ENCODE measurements at regions of chr19 and their contacts with region 1.

Region 1: DNA sequence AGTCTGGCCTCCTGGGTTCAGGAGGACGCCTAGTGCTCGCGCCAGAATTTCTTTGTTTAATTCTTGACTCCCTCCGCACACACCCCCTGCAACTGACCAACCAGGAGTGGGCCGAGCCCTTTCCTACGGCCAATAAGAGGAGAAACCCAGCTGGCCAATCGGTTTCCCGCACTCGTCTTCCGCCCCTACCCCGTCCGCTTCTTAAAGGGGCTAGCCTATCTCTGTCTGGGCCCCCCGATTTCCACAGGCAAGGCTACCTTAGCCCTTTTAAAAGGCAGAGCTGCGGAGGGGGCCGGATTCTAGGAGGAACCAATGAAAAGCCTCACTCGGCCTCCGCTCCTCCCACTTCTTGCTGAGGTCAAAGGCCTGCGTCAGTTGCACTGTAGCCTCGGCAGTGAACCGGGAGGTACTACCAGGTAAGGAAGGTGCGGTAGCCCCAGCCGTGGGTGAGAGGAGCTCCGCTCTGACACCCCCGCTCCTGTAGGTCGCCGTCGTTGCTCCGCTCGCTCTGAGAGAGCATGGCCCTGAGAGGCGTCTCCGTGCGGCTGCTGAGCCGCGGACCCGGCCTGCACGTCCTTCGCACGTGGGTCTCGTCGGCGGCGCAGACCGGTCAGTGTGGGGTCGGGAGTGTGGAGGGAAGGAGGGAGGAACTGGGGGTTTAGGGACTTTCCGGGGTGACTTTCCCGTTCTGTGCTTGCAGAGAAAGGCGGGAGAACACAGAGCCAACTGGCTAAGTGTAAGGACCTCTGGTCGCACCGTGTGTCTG is at the start of gene GCDH:
- DNase-seq: peak; percentile 96 to 98
- H3K4me3 ChIP-seq: peak within 1 kb of the TSS; percentile 89
- H3K4me3 Mint-ChIP-seq: peak within 1 kb of the TSS; percentile 96
- H3K27ac Mint-ChIP-seq: peak within 1 kb of the TSS; percentile 87
- H3K4me1 ChIP-seq: no peaks in the 10 kb centered on the region
- H3K4me1 Mint-ChIP-seq: peaks cover 5% of the 10 kb centered on the region
- H3K27me3 ChIP-seq: no peaks in the 10 kb centered on the region
- H3K27me3 Mint-ChIP-seq: peaks cover 5% of the 10 kb centered on the region
- CTCF ChIP-seq: no peak
- total RNA-seq, gene GCDH: 31.4 and 32.4 TPM in 2 replicates

Region 2: DNA sequence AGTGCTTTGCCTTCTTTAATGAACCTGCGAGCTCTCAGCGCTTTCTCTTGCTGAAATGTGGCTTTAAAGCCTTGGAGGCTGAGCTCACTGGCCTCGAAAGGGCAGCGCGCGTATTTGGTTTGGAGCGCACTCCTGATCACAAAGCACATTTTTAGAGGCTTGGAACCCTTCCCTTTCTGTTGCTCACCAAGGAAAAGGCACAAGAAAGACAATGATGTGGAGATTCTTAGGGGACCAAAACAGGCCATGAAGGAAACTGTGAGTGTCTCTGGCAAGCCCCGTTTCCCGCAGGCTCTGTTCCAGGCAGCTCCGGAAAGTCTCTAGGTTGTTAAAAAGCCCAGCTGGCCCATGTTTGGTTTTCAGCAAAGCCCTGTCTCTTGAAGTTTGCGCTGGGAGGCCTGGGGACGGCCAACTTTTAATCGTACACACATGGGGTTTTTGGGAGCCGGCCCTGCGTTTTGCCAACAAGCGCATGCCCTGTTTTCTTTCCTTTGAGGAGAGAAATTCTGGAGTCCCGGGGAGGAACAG is 1726.0 kb before region 1 on chr19:
- CTCF ChIA-PET with region 1: no interaction called
- POLR2A ChIA-PET with region 1: interaction called, 10 read pairs
- intact Hi-C with region 1: no loop called
- DNase-seq: no peak
- H3K4me3 ChIP-seq: no peak overlapping the region
- H3K4me3 Mint-ChIP-seq: no peak overlapping the region
- H3K27ac Mint-ChIP-seq: no peak overlapping the region
- H3K4me1 ChIP-seq: no peaks in the 10 kb centered on the region
- H3K4me1 Mint-ChIP-seq: no peaks in the 10 kb centered on the region
- H3K27me3 ChIP-seq: no peaks in the 10 kb centered on the region
- H3K27me3 Mint-ChIP-seq: no peaks in the 10 kb centered on the region
- CTCF ChIP-seq: no peak

Region 3: DNA sequence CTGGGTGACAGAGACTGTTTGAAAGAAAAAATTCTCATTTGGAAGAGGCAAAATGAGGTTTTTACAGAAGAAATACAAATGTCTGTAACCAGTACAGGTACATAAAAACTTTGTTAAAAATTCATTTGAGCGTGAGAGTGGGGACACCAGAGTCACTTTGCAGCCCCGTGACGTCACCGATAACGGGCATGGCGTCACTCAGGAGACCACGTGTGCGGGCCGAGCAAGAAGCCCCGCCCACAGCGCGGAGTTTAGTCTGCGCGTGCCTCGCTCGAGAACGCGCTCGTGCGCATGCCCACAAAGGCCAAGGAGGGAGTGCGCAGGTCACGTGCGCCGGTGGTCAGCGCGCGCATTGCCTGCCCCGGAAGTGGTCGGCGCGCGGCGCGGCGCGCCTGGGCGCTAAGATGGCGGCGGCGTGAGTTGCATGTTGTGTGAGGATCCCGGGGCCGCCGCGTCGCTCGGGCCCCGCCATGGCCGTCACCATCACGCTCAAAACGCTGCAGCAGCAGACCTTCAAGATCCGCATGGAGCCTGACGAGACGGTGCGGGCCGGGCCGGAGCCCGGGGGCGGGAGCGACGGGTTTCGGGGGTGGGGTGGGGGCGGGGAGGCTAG is 54.6 kb after region 1 on chr19 and contains the start of gene RAD23A:
- CTCF ChIA-PET with region 1: no interaction called
- POLR2A ChIA-PET with region 1: interaction called, 17 read pairs
- intact Hi-C with region 1: no loop called
- DNase-seq: peak; percentile 96 to 97
- H3K4me3 ChIP-seq: peak within 1 kb of the TSS; percentile 77
- H3K4me3 Mint-ChIP-seq: peak within 1 kb of the TSS; percentile 83
- H3K27ac Mint-ChIP-seq: peak within 1 kb of the TSS; percentile 96
- H3K4me1 ChIP-seq: peaks cover 12% of the 10 kb centered on the region
- H3K4me1 Mint-ChIP-seq: peaks cover 13% of the 10 kb centered on the region
- H3K27me3 ChIP-seq: no peaks in the 10 kb centered on the region
- H3K27me3 Mint-ChIP-seq: no peaks in the 10 kb centered on the region
- CTCF ChIP-seq: no peak
- total RNA-seq, gene RAD23A: 102 and 112 TPM in 2 replicates

Measured in Caco-2 (cell line).